Transverse colon (tissue), 4 donors: ENCODE measurements at regions of chr18 and their contacts with region 1.

Region 1: GRCh38 chr18:49550621-49551339 is 11.1 kb upstream of the LIPG start:
- DNase-seq: no peak
- H3K4me3 ChIP-seq: no peak overlapping the region
- H3K27ac ChIP-seq: no peak overlapping the region
- H3K4me1 ChIP-seq: no peaks in the 10 kb centered on the region
- H3K27me3 ChIP-seq: no peaks in the 10 kb centered on the region
- CTCF ChIP-seq: no peak
- EP300 ChIP-seq: no peak
- POLR2A ChIP-seq: no peak

Region 2: GRCh38 chr18:49784427-49785185 is 233.8 kb after region 1 on chr18:
- in situ Hi-C with region 1: no loop called
- intact Hi-C with region 1: loop called (anchors 10 kb)
- DNase-seq: no peak
- H3K4me3 ChIP-seq: no peak overlapping the region
- H3K27ac ChIP-seq: no peak overlapping the region
- H3K4me1 ChIP-seq: peaks cover 0 to 8% (median 4%) of the 10 kb centered on the region in 4 donors
- H3K27me3 ChIP-seq: no peaks in the 10 kb centered on the region
- CTCF ChIP-seq: peak in 1 of 5 experiments; percentile 14
- EP300 ChIP-seq: no peak
- POLR2A ChIP-seq: no peak